RWPE1 (cell line): ENCODE measurements at regions of chr13 and their contacts with region 1.

Region 1: GRCh38 chr13:110841846-110842245 is 73.0 kb downstream of the ANKRD10 start:
- DNase-seq: peak; percentile 69
- H3K27ac ChIP-seq: no peak overlapping the region
- CTCF ChIP-seq: no peak

Region 2: GRCh38 chr13:111397202-111397880 is 555.5 kb after region 1 on chr13:
- CTCF ChIA-PET with region 1: interaction called, 10 read pairs
- POLR2A ChIA-PET with region 1: no interaction called
- DNase-seq: no peak
- H3K27ac ChIP-seq: no peak overlapping the region
- CTCF ChIP-seq: no peak